K562 (cell line): ENCODE measurements at regions of chr15 and their contacts with region 1.

Region 1: DNA sequence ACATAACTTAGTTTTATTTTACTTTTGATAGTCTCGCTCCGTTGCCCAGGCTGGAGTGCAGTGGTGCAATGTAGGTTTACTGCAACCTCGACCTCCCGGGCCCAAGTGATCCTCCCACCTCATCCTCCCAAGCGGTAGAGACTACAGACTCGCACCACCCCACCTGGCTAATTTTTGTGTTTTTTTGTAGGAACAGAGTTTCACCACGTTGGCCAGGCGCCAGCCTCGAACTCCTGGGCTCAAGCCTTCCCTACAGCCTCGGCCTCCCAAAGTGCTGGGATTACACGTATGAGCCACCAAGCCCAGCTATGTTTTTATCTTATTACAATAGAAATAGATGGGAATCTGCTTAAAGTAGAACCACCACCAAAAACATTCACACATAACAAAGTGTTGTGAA is 2.9 kb downstream of the RNU5A-1 start:
- DNase-seq: no peak
- ATAC-seq: no peak
- H3K4me3 ChIP-seq: no peak overlapping the region
- H3K27ac ChIP-seq: no peak overlapping the region
- H3K4me1 ChIP-seq: peaks cover 17% of the 10 kb centered on the region in 2 experiments; a peak in 4 of 5 replicates
- H3K27me3 ChIP-seq: no peaks in the 10 kb centered on the region
- CTCF ChIP-seq: no peak
- EP300 ChIP-seq: no peak
- POLR2A ChIP-seq: no peak
- RAD21 ChIP-seq: no peak

Region 2: DNA sequence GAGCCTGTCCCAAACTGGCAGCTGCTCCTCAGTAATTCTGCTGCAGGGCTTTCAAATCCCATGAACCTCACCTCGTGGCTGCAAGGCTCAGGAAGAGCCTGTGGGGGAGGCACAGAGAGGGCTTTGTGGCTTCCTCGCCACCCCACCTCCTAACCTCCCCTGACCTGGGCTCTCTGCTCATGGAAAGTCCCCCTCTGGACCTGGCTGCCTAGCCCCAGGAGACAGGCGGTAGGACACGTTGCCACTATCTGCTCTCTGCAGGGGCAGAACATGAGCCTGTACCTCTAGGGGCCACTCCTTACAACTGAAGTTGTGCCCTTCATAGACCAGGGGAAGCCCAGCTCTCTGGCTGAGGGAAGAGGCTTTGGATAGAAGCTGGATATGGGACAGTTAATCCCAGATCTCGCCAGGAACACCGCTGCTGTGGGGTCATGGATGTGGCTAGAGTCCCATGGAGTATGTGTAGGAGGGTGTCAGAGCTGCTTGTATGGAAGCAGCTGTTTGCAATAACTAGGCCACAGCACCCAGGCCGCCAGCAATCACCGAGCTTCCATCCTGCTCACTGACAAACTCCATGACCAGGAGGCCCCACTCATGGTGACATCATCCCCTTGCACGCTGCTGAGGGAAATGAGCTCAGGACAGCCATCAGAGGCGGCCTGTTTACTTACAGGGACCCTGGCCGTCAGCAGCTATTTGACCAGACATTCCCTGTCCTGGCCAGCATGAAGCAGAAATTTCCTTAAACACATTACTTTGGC is 53.5 kb before region 1 on chr15:
- CTCF ChIA-PET with region 1: no interaction called
- POLR2A ChIA-PET with region 1: no interaction called
- in situ Hi-C with region 1: no loop called
- intact Hi-C with region 1: no loop called
- DNase-seq: peak in 1 of 4 experiments; percentile 32
- ATAC-seq: peak; percentile 72
- H3K4me3 ChIP-seq: no peak overlapping the region
- H3K27ac ChIP-seq: peak overlapping the region; percentile 21; the same call in 1 of the 3 replicates
- H3K4me1 ChIP-seq: peaks cover 11 to 15% of the 10 kb centered on the region in 2 experiments; a peak in 4 of 5 replicates
- H3K27me3 ChIP-seq: no peaks in the 10 kb centered on the region
- CTCF ChIP-seq: no peak
- EP300 ChIP-seq: no peak
- POLR2A ChIP-seq: no peak
- RAD21 ChIP-seq: no peak

Region 3: GRCh38 chr15:65286704-65287519 is 11.8 kb before region 1 on chr15 and contains the start of gene PARP16:
- CTCF ChIA-PET with region 1: no interaction called
- POLR2A ChIA-PET with region 1: interaction called, 30 read pairs
- in situ Hi-C with region 1: no loop called
- intact Hi-C with region 1: no loop called
- DNase-seq: peak; percentile 85 to 94 (median 92)
- ATAC-seq: peak; percentile 98
- H3K4me3 ChIP-seq: peak within 1 kb of the TSS; percentile 53
- H3K27ac ChIP-seq: peak within 1 kb of the TSS; percentile 68
- H3K4me1 ChIP-seq: peaks cover 10 to 17% of the 10 kb centered on the region in 2 experiments; a peak in 4 of 5 replicates
- H3K27me3 ChIP-seq: no peaks in the 10 kb centered on the region
- CTCF ChIP-seq: peak in 2 of 3 experiments; percentile 56 to 67; a peak in 3 of 6 replicates
- EP300 ChIP-seq: no peak
- POLR2A ChIP-seq: peak; percentile 69
- RAD21 ChIP-seq: no peak
- polyA plus RNA-seq, gene PARP16: 3.0 to 5.6 TPM